ENCODE measurements at regions of chr10 and their contacts with region 1.

Region 1: DNA sequence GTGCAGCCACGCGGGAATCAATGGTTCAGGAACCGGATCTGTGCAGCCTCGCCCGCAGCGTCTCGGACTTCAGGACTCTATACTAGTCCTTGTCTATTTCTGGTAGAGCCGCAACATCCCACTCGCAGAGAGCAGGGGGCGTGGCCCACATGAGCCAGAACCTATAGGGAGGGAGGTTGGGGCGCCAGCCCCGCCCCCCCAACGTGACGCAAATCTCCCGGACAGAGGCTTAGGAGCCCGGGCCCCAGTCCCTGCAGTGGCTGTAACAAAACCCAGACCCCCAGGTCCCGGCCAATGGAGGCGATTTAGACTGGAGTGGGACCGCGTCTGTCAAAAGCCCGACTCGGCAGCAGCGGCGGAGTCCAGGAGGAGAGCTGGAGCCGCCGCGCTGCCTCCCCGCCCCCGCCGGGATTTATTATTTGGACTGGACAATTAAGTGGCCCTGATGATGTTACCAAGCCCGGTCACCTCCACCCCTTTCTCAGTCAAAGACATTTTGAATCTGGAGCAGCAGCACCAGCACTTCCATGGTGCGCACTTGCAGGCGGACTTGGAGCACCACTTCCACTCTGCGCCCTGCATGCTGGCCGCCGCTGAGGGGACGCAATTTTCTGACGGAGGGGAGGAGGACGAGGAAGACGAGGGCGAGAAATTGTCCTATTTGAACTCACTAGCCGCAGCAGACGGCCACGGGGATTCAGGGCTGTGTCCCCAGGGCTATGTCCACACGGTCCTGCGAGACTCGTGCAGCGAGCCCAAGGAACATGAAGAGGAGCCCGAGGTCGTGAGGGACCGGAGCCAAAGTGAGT is at the start of gene NKX2-3:
- DNase-seq: peak; percentile 59
- ATAC-seq: peak; percentile 35
- H3K4me3 ChIP-seq: no peak within 1 kb of the TSS
- H3K4me3 Mint-ChIP-seq: peak within 1 kb of the TSS; percentile 86
- H3K27ac ChIP-seq: no peak within 1 kb of the TSS
- H3K27ac Mint-ChIP-seq: peak within 1 kb of the TSS; percentile 59
- H3K4me1 ChIP-seq: peaks cover 75 to 88% of the 10 kb centered on the region in 2 donors
- H3K4me1 Mint-ChIP-seq: peaks cover 66% of the 10 kb centered on the region
- H3K27me3 ChIP-seq: peaks cover 0 to 95% (median 83%) of the 10 kb centered on the region in 4 experiments
- H3K27me3 Mint-ChIP-seq: peaks cover 86% of the 10 kb centered on the region
- CTCF ChIP-seq: no peak
- total RNA-seq, gene NKX2-3: not detected in 2 replicates

Region 2: GRCh38 chr10:99234041-99234790 is 298.7 kb before region 1 on chr10:
- CTCF ChIA-PET with region 1: no interaction called
- POLR2A ChIA-PET with region 1: no interaction called
- intact Hi-C with region 1: loop called (anchors 5 kb)
- DNase-seq: peak; percentile 81
- ATAC-seq: peak; percentile 97
- H3K4me3 ChIP-seq: peak overlapping the region in 2 of 5 experiments; percentile 3 to 50
- H3K4me3 Mint-ChIP-seq: peak overlapping the region; percentile 80
- H3K27ac ChIP-seq: no peak overlapping the region
- H3K27ac Mint-ChIP-seq: peak overlapping the region; percentile 50
- H3K4me1 ChIP-seq: peaks cover 40 to 53% of the 10 kb centered on the region in 2 donors
- H3K4me1 Mint-ChIP-seq: peaks cover 26% of the 10 kb centered on the region
- H3K27me3 ChIP-seq: peaks cover 5 to 71% (median 62%) of the 10 kb centered on the region in 4 experiments
- H3K27me3 Mint-ChIP-seq: peaks cover 74% of the 10 kb centered on the region
- CTCF ChIP-seq: no peak

Region 3: GRCh38 chr10:99658622-99659030 is 125.7 kb after region 1 on chr10:
- CTCF ChIA-PET with region 1: no interaction called
- POLR2A ChIA-PET with region 1: no interaction called
- intact Hi-C with region 1: no loop called
- DNase-seq: no peak
- ATAC-seq: no peak
- H3K4me3 ChIP-seq: peak overlapping the region; percentile 63 to 89 (median 82)
- H3K4me3 Mint-ChIP-seq: peak overlapping the region; percentile 84
- H3K27ac ChIP-seq: no peak overlapping the region
- H3K27ac Mint-ChIP-seq: peak overlapping the region; percentile 32
- H3K4me1 ChIP-seq: peaks cover 7 to 16% of the 10 kb centered on the region in 2 donors
- H3K4me1 Mint-ChIP-seq: peaks cover 19% of the 10 kb centered on the region
- H3K27me3 ChIP-seq: peaks cover 0 to 4% (median 0%) of the 10 kb centered on the region in 4 experiments
- H3K27me3 Mint-ChIP-seq: peaks cover 13% of the 10 kb centered on the region
- CTCF ChIP-seq: no peak

Measured in B cell (primary cell).